ENCODE measurements at regions of chr3 and their contacts with region 1.

Region 1: GRCh38 chr3:193743702-193744047 is 150.7 kb downstream of the OPA1 start:
- DNase-seq: peak in 1 of 2 experiments; percentile 57
- H3K4me3 ChIP-seq: peak overlapping the region; percentile 35
- H3K4me3 Mint-ChIP-seq: peak overlapping the region; percentile 77
- H3K27ac Mint-ChIP-seq: peak overlapping the region; percentile 87
- H3K4me1 ChIP-seq: peaks cover 30% of the 10 kb centered on the region
- H3K4me1 Mint-ChIP-seq: peaks cover 24% of the 10 kb centered on the region
- H3K27me3 ChIP-seq: no peaks in the 10 kb centered on the region
- H3K27me3 Mint-ChIP-seq: no peaks in the 10 kb centered on the region
- CTCF ChIP-seq: no peak

Region 2: GRCh38 chr3:193640165-193640715 is 103.4 kb before region 1 on chr3:
- CTCF ChIA-PET with region 1: no interaction called
- POLR2A ChIA-PET with region 1: no interaction called
- intact Hi-C with region 1: no loop called
- DNase-seq: no peak
- H3K4me3 ChIP-seq: no peak overlapping the region
- H3K4me3 Mint-ChIP-seq: no peak overlapping the region
- H3K27ac Mint-ChIP-seq: no peak overlapping the region
- H3K4me1 ChIP-seq: no peaks in the 10 kb centered on the region
- H3K4me1 Mint-ChIP-seq: no peaks in the 10 kb centered on the region
- H3K27me3 ChIP-seq: no peaks in the 10 kb centered on the region
- H3K27me3 Mint-ChIP-seq: no peaks in the 10 kb centered on the region
- CTCF ChIP-seq: no peak

Region 3: DNA sequence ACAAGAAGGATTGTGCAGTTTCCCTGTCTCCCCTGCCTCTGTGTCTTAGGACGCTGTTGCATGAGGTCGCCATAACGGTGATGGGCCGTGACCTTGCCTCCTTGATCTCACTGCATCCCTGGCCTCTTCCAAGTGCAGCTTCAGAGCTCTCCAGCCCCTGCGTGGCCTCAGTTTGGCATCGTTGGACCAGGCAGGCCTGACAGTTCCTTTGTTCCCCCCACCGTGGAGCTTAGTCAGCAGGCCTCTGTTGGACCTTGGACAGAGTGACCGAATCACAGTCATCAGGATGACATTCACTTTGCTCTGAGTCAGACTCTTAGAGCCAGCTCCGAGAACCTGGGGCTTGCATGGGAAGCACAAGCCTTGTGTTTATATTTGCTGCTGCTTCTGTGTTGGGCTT is 11.3 kb before region 1 on chr3:
- CTCF ChIA-PET with region 1: no interaction called
- POLR2A ChIA-PET with region 1: no interaction called
- intact Hi-C with region 1: loop called (anchors 1 kb)
- DNase-seq: peak; percentile 41 to 63
- H3K4me3 ChIP-seq: no peak overlapping the region
- H3K4me3 Mint-ChIP-seq: no peak overlapping the region
- H3K27ac Mint-ChIP-seq: peak overlapping the region; percentile 19
- H3K4me1 ChIP-seq: peaks cover 13% of the 10 kb centered on the region
- H3K4me1 Mint-ChIP-seq: no peaks in the 10 kb centered on the region
- H3K27me3 ChIP-seq: no peaks in the 10 kb centered on the region
- H3K27me3 Mint-ChIP-seq: no peaks in the 10 kb centered on the region
- CTCF ChIP-seq: no peak

Region 4: DNA sequence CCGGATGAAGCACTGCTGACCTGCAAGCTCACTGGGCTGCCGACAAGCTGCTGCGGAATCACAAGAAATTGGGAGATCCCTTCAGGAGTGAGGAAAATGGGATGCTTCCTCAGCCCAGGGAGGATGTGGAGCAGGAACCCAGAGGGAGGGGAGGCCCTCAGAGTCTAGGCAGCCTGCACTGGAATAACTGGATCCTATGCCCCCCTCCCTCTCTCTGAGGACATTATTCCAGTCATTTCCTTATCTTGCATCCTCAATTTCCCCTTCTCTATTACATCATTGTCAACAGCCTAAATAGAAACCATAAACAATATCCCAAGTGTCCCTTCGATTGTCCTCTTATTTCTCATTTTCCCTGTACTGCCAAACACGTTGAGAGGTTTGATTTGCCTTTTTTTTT is 18.3 kb after region 1 on chr3:
- CTCF ChIA-PET with region 1: no interaction called
- POLR2A ChIA-PET with region 1: no interaction called
- intact Hi-C with region 1: loop called (anchors 2 kb)
- DNase-seq: no peak
- H3K4me3 ChIP-seq: no peak overlapping the region
- H3K4me3 Mint-ChIP-seq: no peak overlapping the region
- H3K27ac Mint-ChIP-seq: no peak overlapping the region
- H3K4me1 ChIP-seq: no peaks in the 10 kb centered on the region
- H3K4me1 Mint-ChIP-seq: no peaks in the 10 kb centered on the region
- H3K27me3 ChIP-seq: no peaks in the 10 kb centered on the region
- H3K27me3 Mint-ChIP-seq: no peaks in the 10 kb centered on the region
- CTCF ChIP-seq: no peak

Region 5: GRCh38 chr3:193997228-193998122 is 253.8 kb after region 1 on chr3:
- CTCF ChIA-PET with region 1: no interaction called
- POLR2A ChIA-PET with region 1: no interaction called
- intact Hi-C with region 1: no loop called
- DNase-seq: no peak
- H3K4me3 ChIP-seq: no peak overlapping the region
- H3K4me3 Mint-ChIP-seq: no peak overlapping the region
- H3K27ac Mint-ChIP-seq: no peak overlapping the region
- H3K4me1 ChIP-seq: peaks cover 12% of the 10 kb centered on the region
- H3K4me1 Mint-ChIP-seq: peaks cover 15% of the 10 kb centered on the region
- H3K27me3 ChIP-seq: no peaks in the 10 kb centered on the region
- H3K27me3 Mint-ChIP-seq: no peaks in the 10 kb centered on the region
- CTCF ChIP-seq: no peak